IMR-90 (cell line): ENCODE measurements at regions of chr15 and their contacts with region 1.

Region 1: GRCh38 chr15:54917312-54917711 is 279.4 kb downstream of the RSL24D1 start:
- DNase-seq: no peak
- ATAC-seq: no peak
- H3K4me3 ChIP-seq: no peak overlapping the region
- H3K27ac ChIP-seq: no peak overlapping the region
- H3K4me1 ChIP-seq: no peaks in the 10 kb centered on the region
- H3K27me3 ChIP-seq: no peaks in the 10 kb centered on the region
- CTCF ChIP-seq: no peak
- POLR2A ChIP-seq: no peak
- RAD21 ChIP-seq: no peak

Region 2: DNA sequence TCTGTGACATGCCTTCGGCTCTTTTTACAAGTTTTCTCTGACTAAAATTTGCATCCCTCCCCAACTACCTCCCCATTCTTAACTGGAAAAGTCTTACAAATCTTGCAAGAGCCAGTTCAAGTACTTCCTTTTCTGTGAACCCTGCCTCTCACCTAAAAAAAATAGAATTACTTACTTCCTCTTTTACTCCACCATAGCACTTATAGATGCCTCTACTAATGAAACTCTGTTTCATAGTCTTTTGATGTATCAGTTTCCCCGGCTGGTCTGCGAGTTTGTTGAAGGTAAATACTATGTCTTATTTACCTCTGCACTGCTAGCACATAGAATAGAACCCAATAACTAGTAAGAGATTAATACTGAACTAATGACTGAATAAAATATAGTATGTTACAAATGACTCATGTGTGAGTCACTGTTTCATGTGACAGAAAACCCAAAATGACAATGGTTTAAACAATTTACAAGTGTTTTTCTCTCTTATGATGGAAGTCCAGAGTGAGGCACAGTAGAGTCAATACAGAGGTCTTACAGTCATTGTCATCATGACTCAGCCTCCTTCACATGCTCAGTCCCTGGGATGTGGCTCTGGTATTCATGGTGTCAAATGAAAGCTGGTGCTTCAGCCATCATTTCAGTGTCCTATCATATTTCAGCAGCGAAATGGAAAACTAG is 114.0 kb before region 1 on chr15:
- CTCF ChIA-PET with region 1: no interaction called
- POLR2A ChIA-PET with region 1: no interaction called
- dilution Hi-C with region 1: no loop called
- in situ Hi-C with region 1: loop called (anchors 25 kb)
- intact Hi-C with region 1: no loop called
- DNase-seq: peak; percentile 0
- ATAC-seq: no peak
- H3K4me3 ChIP-seq: no peak overlapping the region
- H3K27ac ChIP-seq: no peak overlapping the region
- H3K4me1 ChIP-seq: no peaks in the 10 kb centered on the region
- H3K27me3 ChIP-seq: no peaks in the 10 kb centered on the region
- CTCF ChIP-seq: no peak
- POLR2A ChIP-seq: no peak
- RAD21 ChIP-seq: no peak

Region 3: GRCh38 chr15:55823191-55823670 is 905.9 kb after region 1 on chr15:
- CTCF ChIA-PET with region 1: no interaction called
- POLR2A ChIA-PET with region 1: no interaction called
- dilution Hi-C with region 1: no loop called
- in situ Hi-C with region 1: no loop called
- intact Hi-C with region 1: no loop called
- DNase-seq: peak; percentile 71
- ATAC-seq: peak; percentile 47
- H3K4me3 ChIP-seq: no peak overlapping the region
- H3K27ac ChIP-seq: no peak overlapping the region
- H3K4me1 ChIP-seq: peaks cover 6% of the 10 kb centered on the region
- H3K27me3 ChIP-seq: no peaks in the 10 kb centered on the region; the same call in 1 of the 2 replicates
- CTCF ChIP-seq: no peak
- POLR2A ChIP-seq: no peak
- RAD21 ChIP-seq: no peak